Activated T-helper 2 cell treated with anti-CD3 and anti-CD28 coated beads, Interferon-gamma antibody, Interleukin-2, Interleukin-4, amounts not matched to agents 10 μg/mL and 5 μg/mL and 100 μg/mL, durations not matched to agents 14 hours and 24 hours and 36 hours (primary cell): ENCODE measurements at regions of chr6 and their contacts with region 1.

Region 1: GRCh38 chr6:27547157-27548075 is 74.5 kb upstream of the ZNF184 start:
- DNase-seq: no peak
- H3K4me3 Mint-ChIP-seq: peak overlapping the region; percentile 60
- H3K27ac Mint-ChIP-seq: no peak overlapping the region
- H3K4me1 Mint-ChIP-seq: peaks cover 35% of the 10 kb centered on the region
- H3K27me3 Mint-ChIP-seq: peaks cover 77% of the 10 kb centered on the region

Region 2: DNA sequence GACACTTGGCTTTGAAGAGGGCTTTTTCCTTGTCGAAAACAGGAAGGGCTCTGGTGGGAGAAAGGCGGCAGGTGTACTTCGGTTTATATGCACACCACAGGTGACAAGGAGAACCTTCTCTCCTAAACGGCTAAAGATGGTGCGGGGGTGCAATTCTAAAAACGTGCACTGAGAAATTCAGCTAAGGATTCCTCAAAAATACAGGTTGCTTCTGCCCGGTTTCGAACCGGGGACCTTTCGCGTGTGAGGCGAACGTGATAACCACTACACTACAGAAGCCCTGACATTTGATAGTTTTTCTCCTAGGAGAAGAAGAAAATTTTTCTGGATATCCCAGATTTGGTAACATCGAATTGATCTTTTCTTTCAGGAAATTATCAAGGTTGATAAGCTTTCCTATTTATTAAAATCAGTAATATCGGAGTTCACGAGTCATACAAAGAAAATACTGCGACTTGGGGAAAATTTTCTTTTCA is 267.3 kb before region 1 on chr6:
- intact Hi-C with region 1: loop called (anchors 2 kb)
- DNase-seq: no peak
- H3K4me3 Mint-ChIP-seq: peak overlapping the region; percentile 68
- H3K27ac Mint-ChIP-seq: no peak overlapping the region
- H3K4me1 Mint-ChIP-seq: peaks cover 18% of the 10 kb centered on the region
- H3K27me3 Mint-ChIP-seq: peaks cover 71% of the 10 kb centered on the region

Region 3: GRCh38 chr6:27592481-27593199 is 45.2 kb after region 1 on chr6:
- intact Hi-C with region 1: loop called (anchors 5 kb)
- DNase-seq: peak; percentile 55
- H3K4me3 Mint-ChIP-seq: no peak overlapping the region
- H3K27ac Mint-ChIP-seq: no peak overlapping the region
- H3K4me1 Mint-ChIP-seq: peaks cover 1% of the 10 kb centered on the region
- H3K27me3 Mint-ChIP-seq: peaks cover 25% of the 10 kb centered on the region

Region 4: DNA sequence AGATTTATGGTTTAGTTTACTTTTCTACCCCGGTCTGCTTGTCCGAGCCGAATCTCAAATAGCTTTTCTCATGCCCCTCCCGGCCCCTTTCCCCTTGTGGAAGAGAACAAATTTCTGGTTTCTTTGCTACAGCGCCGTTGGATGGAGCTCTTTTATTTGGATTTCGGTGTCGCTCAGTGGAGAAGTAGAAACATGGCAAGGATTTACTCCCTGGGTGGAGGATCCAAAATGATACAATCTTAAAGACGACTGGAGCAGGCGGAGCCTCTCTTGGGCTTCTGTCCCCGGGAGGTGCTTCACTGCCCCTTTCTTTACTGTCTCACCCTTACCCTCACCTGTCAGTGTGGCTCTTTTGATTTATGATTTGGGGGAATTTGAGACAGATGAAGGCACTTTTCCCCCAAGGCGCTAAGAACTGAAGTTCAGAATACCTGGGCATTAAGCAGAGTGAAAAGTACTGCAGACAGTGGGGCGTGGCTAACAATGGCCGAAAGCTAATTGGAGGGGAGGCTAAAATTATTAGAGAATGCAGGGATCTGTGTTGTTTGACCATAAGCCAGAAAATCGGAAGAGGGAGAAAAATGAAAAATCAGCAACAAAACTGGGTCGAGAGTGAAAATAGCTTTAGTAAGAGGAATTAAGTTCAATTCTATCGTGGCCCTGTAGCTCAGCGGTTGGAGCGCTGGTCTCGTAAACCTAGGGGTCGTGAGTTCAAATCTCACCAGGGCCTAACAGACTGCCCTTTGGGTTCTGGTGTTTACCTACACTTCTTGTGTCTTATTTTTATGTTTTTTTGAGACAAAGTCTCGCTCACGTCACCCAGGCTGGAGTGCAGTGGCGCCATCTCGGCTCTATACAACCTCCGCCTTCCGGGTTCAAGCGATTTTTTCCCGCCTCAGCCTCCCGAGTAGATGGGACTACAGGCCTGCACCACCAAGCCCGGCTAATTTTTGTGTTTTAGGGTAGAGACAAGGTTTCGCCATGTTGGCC is 70.6 kb after region 1 on chr6:
- intact Hi-C with region 1: no loop called
- DNase-seq: no peak
- H3K4me3 Mint-ChIP-seq: peak overlapping the region; percentile 70
- H3K27ac Mint-ChIP-seq: no peak overlapping the region
- H3K4me1 Mint-ChIP-seq: peaks cover 14% of the 10 kb centered on the region
- H3K27me3 Mint-ChIP-seq: peaks cover 52% of the 10 kb centered on the region

Region 5: GRCh38 chr6:27687154-27688013 is 140.0 kb after region 1 on chr6:
- intact Hi-C with region 1: loop called (anchors 5 kb)
- DNase-seq: peak; percentile 73
- H3K4me3 Mint-ChIP-seq: peak overlapping the region; percentile 88
- H3K27ac Mint-ChIP-seq: peak overlapping the region; percentile 68
- H3K4me1 Mint-ChIP-seq: peaks cover 16% of the 10 kb centered on the region
- H3K27me3 Mint-ChIP-seq: peaks cover 17% of the 10 kb centered on the region

Region 6: GRCh38 chr6:28141500-28142329 is 594.3 kb after region 1 on chr6 and contains the start of gene ZKSCAN8:
- intact Hi-C with region 1: no loop called
- DNase-seq: peak; percentile 71
- H3K4me3 Mint-ChIP-seq: peak within 1 kb of the TSS; percentile 92
- H3K27ac Mint-ChIP-seq: peak within 1 kb of the TSS; percentile 85
- H3K4me1 Mint-ChIP-seq: peaks cover 48% of the 10 kb centered on the region
- H3K27me3 Mint-ChIP-seq: no peaks in the 10 kb centered on the region
- total RNA-seq, gene ZKSCAN8: 17.9 and 20.8 TPM in 2 replicates